ENCODE measurements at regions of chr7 and their contacts with region 1.

Region 1: DNA sequence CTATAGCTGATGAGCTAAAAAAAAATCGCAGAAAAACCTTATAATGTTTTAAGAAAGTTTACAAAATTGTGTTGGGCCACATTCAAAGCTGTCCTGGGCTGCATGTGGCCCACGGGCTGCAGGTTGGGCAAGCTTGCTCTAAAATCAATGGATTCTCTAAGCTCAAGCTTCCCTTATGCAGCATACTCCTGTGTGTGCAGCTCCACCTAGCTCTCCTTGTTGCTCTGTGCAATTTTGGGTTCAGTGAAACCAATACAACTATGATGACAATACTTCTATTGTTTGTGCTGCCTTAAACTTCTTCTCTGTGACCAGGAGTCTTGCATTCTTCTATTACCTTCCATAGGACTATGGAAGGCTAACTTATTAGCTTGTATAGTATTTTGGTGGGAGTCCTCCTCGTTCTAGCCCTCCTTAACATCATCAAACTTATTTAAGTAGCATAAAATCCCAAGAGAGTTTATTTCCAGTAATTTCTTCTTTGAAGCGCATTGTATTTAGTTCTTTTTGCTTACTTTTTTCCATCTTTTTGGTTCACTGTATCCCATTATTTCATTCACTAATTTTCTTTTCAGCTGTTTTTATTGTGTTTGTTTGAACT is 170.9 kb upstream of the SMIM30 start:
- DNase-seq: no peak
- H3K4me3 ChIP-seq: no peak overlapping the region
- H3K27ac ChIP-seq: no peak overlapping the region
- H3K27me3 ChIP-seq: no peaks in the 10 kb centered on the region
- CTCF ChIP-seq: peak; percentile 76

Region 2: DNA sequence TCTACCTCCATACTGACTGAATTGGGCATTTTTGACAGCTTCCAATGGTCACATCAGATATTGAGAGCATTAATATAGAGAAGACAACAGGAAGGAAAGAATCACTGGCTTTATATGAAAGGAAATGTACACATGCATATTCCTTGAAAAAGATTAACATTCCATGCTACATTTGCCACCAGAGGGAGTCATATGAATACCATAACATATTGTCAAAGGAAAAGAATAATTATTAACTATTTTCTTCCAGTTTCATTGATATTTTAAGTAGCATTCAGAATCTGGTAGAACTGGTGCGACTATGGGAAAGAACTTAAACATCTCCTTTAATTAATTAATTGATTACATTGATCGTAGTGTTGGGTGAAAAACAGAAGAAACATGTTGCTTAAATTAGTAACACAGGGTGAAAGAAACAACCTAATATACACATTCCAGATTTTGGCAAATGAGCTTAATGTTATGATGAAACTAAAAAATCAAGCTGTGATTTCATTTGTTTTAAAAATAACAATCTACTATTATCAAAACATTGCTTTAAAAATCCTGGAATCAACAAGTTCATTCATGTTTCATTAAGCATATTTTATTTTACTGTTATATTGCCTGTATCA is 274.1 kb before region 1 on chr7:
- CTCF ChIA-PET with region 1: interaction called, 27 read pairs
- POLR2A ChIA-PET with region 1: no interaction called
- DNase-seq: no peak
- H3K4me3 ChIP-seq: no peak overlapping the region
- H3K27ac ChIP-seq: no peak overlapping the region
- H3K27me3 ChIP-seq: no peaks in the 10 kb centered on the region
- CTCF ChIP-seq: peak; percentile 60

Measured in AG04450 (cell line).